PC-3 (cell line): ENCODE measurements at regions of chr5 and their contacts with region 1.

Region 1: DNA sequence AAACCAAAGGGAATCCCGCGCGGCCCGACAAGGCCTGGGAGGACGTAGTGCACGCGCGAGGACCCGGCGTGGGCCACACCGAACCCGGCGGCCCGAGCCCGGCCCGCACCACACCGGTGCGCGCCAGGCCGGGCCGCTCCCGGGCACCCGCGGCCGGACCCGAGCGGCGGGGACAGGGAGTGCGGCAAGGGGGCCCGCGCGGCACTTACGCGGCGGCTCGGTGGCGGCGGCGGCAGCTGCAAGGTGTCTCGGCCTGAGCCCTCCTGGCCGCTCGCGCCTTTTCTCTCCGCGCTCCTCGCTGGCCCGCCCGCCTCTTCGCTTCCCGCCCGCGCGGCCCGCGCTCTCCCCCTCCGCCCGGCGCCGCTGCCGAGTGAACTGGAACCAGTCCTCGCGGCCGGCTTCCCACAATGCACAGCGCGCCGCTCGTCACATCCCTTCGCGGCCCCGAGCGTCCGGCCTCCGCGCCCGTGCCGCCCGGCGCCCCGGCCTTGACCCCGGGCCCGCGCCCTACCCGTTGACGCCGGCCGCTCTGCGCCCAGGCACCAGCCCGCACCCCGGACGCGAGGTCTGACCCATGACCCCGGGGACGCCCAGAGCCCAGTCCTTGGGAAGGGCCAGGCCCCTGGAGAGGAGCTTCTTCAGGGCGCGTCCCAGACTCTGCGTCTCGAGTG is at the start of gene MACROH2A1:
- DNase-seq: peak; percentile 69
- ATAC-seq: peak; percentile 79
- H3K4me3 ChIP-seq: peak within 1 kb of the TSS; percentile 94
- H3K27ac ChIP-seq: peak within 1 kb of the TSS; percentile 77
- H3K4me1 ChIP-seq: peaks cover 23% of the 10 kb centered on the region
- H3K27me3 ChIP-seq: no peaks in the 10 kb centered on the region
- CTCF ChIP-seq: no peak
- total RNA-seq, gene MACROH2A1: 388 and 455 TPM in 2 replicates

Region 2: GRCh38 chr5:135511761-135512575 is 113.0 kb after region 1 on chr5:
- CTCF ChIA-PET with region 1: no interaction called
- POLR2A ChIA-PET with region 1: interaction called, 20 read pairs
- intact Hi-C with region 1: no loop called
- DNase-seq: no peak
- ATAC-seq: no peak
- H3K4me3 ChIP-seq: no peak overlapping the region
- H3K27ac ChIP-seq: no peak overlapping the region
- H3K4me1 ChIP-seq: no peaks in the 10 kb centered on the region
- H3K27me3 ChIP-seq: no peaks in the 10 kb centered on the region
- CTCF ChIP-seq: no peak